ENCODE measurements at regions of chr17 and their contacts with region 1.

Region 1: DNA sequence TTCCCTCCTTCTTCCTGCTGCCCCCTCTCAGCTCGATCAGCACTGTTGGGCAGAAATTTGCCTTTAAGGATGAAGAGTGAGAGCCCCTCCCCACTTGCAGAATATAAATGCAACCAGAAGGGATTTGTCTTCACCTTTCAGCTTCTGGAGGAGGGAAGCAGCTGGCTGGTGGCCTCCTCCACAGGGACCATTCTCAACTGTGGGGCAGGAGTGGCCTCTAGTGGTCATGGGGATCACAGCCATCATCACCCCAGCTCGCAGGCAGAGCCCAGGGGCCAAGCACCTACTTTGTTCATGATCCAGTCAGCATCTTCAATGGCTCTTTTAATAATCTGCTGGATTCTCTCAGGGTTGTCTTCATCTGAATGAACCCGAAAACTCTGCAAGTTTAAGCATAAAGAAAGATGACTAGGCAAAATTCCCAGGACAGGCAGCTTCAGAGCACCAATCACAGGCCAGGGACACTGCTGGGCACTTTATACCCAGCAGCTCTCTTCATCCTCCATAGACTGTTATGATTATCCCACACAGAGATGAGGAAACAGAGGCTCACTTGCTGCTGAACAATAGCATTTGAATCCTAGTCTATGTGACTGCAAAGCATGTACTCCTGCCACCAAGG is 13.1 kb downstream of the LYRM9 start:
- DNase-seq: no peak
- H3K4me3 ChIP-seq: no peak overlapping the region
- H3K27ac ChIP-seq: no peak overlapping the region
- H3K4me1 ChIP-seq: no peaks in the 10 kb centered on the region
- H3K27me3 ChIP-seq: no peaks in the 10 kb centered on the region
- CTCF ChIP-seq: peak; percentile 51 to 86 (median 70)
- POLR2A ChIP-seq: no peak

Region 2: GRCh38 chr17:27800522-27800921 is 79.6 kb before region 1 on chr17 and contains the start of gene NOS2:
- intact Hi-C with region 1: loop called (anchors 5 kb)
- DNase-seq: no peak
- H3K4me3 ChIP-seq: no peak within 1 kb of the TSS
- H3K27ac ChIP-seq: no peak within 1 kb of the TSS
- H3K4me1 ChIP-seq: peaks cover 0 to 11% (median 0%) of the 10 kb centered on the region in 3 donors
- H3K27me3 ChIP-seq: peaks cover 0 to 57% (median 0%) of the 10 kb centered on the region in 4 donors
- CTCF ChIP-seq: no peak
- POLR2A ChIP-seq: no peak
- total RNA-seq, gene NOS2: 0.11 to 2.7 (median 0.86) TPM

Region 3: GRCh38 chr17:27915709-27916108 is 35.6 kb after region 1 on chr17:
- intact Hi-C with region 1: no loop called
- DNase-seq: no peak
- H3K4me3 ChIP-seq: no peak overlapping the region
- H3K27ac ChIP-seq: no peak overlapping the region
- H3K4me1 ChIP-seq: peaks cover 0 to 11% (median 0%) of the 10 kb centered on the region in 3 donors
- H3K27me3 ChIP-seq: peaks cover 0 to 50% (median 0%) of the 10 kb centered on the region in 4 donors
- CTCF ChIP-seq: no peak
- POLR2A ChIP-seq: no peak

Region 4: GRCh38 chr17:28018439-28019070 is 138.5 kb after region 1 on chr17:
- intact Hi-C with region 1: no loop called
- DNase-seq: no peak
- H3K4me3 ChIP-seq: no peak overlapping the region
- H3K27ac ChIP-seq: no peak overlapping the region
- H3K4me1 ChIP-seq: no peaks in the 10 kb centered on the region
- H3K27me3 ChIP-seq: no peaks in the 10 kb centered on the region
- CTCF ChIP-seq: no peak
- POLR2A ChIP-seq: no peak